A549 (cell line): ENCODE measurements at regions of chr1 and their contacts with region 1.

Region 1: DNA sequence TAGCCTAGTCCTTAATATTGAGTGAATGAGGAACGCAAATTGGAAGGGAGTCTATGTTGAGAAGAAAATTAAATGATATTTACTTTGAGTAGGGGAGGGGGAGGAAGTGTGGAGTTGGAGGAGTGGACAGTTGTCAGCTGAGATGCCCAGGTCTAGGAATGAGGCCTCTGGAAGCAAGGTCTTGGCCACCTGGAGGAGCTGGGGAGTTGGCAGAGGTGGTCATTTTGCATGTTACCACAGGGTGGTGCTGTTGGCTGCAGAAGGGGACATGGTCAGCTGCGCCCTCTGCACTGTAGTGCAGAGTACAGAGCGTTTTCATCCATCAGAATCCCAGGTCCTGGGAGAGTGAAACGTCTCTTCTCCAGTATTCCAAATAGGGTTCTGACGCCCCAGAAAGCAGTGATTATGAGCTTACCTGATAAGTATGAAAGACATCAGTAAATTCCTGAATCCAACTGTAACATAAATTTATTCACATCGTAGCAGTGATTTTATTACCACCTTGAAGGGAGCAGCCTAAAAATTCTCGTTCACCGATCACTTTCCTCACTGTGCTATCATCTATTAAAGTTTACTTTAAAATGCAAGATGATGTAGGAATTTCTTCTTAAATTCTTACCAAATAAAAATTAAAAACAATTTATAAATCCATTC is 13.8 kb downstream of the PARK7 start:
- DNase-seq: peak; percentile 70 to 86
- ATAC-seq: peak; percentile 100
- H3K4me3 ChIP-seq: no peak overlapping the region
- H3K27ac ChIP-seq: peak overlapping the region in 1 of 2 experiments; percentile 31; a peak in 1 of 6 replicates
- H3K4me1 ChIP-seq: 0 out of 3 replicates have a peak, but pooled peaks cover 3% of the 10 kb centered on the region
- CTCF ChIP-seq: peak; percentile 89
- EP300 ChIP-seq: no peak
- POLR2A ChIP-seq: no peak
- RAD21 ChIP-seq: peak; percentile 87

Region 2: GRCh38 chr1:7873801-7874795 is 101.2 kb before region 1 on chr1:
- CTCF ChIA-PET with region 1: no interaction called
- POLR2A ChIA-PET with region 1: no interaction called
- DNase-seq: no peak
- ATAC-seq: no peak
- H3K4me3 ChIP-seq: no peak overlapping the region
- H3K27ac ChIP-seq: no peak overlapping the region
- H3K4me1 ChIP-seq: no peaks in the 10 kb centered on the region
- CTCF ChIP-seq: no peak
- EP300 ChIP-seq: no peak
- POLR2A ChIP-seq: no peak
- RAD21 ChIP-seq: no peak

Region 3: GRCh38 chr1:7940745-7941436 is 34.4 kb before region 1 on chr1 and contains the start of gene TNFRSF9:
- CTCF ChIA-PET with region 1: no interaction called
- POLR2A ChIA-PET with region 1: no interaction called
- DNase-seq: peak; percentile 40 to 77
- ATAC-seq: peak; percentile 75 to 91
- H3K4me3 ChIP-seq: no peak within 1 kb of the TSS
- H3K27ac ChIP-seq: peak within 1 kb of the TSS in 1 of 2 experiments; percentile 67; a peak in 3 of 6 replicates
- H3K4me1 ChIP-seq: peaks cover 24% of the 10 kb centered on the region
- CTCF ChIP-seq: no peak
- EP300 ChIP-seq: no peak
- POLR2A ChIP-seq: no peak
- RAD21 ChIP-seq: no peak
- polyA plus RNA-seq, gene TNFRSF9: 3.2 and 3.4 TPM in 2 replicates

Region 4: DNA sequence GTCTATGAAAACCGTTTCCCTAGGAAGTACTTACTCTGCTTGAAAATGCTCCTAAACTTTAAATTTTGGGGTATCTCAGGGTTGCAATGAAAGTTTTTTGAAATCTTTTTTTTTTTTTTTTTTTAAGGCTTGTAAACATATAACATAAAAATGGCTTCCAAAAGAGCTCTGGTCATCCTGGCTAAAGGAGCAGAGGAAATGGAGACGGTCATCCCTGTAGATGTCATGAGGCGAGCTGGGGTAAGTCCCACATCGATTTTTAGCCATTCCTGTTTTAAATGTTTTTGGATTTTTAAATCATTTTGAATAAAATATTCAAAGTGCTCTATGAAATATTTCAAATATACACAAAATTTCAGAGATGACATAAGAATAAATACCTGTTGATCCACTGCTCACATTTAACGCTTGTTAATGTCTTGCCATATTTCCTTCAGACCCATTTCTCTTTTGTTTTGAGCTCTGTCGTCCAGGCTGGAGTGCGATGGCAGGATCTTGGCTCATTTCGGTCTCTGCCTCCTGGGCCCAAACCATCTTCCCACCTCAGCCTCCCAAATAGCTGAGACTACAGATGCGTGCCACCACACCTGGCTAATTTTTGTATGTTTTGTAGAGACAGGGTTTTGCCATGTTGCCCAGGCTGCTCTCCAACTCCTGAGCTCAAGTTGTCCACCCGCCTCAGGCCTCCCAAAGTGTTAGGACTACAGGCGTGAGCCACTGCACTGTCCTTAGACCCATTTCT is 12.5 kb before region 1 on chr1:
- CTCF ChIA-PET with region 1: interaction called, 16 read pairs
- POLR2A ChIA-PET with region 1: interaction called, 3 read pairs
- DNase-seq: no peak
- ATAC-seq: no peak
- H3K4me3 ChIP-seq: peak overlapping the region; percentile 96
- H3K27ac ChIP-seq: peak overlapping the region; percentile 91 to 99; a peak in 4 of 6 replicates
- H3K4me1 ChIP-seq: peaks cover 10% of the 10 kb centered on the region; the same call in 1 of the 3 replicates
- CTCF ChIP-seq: no peak
- EP300 ChIP-seq: no peak
- POLR2A ChIP-seq: no peak
- RAD21 ChIP-seq: no peak

Region 5: GRCh38 chr1:8010080-8010664 is 34.8 kb after region 1 on chr1:
- CTCF ChIA-PET with region 1: interaction called, 86 read pairs
- POLR2A ChIA-PET with region 1: interaction called, 5 read pairs
- DNase-seq: no peak
- ATAC-seq: peak; percentile 3 to 27; a peak in 3 of 6 replicates
- H3K4me3 ChIP-seq: no peak overlapping the region
- H3K27ac ChIP-seq: peak overlapping the region in 1 of 2 experiments; percentile 34; a peak in 1 of 6 replicates
- H3K4me1 ChIP-seq: peaks cover 78% of the 10 kb centered on the region
- CTCF ChIP-seq: no peak
- EP300 ChIP-seq: no peak
- POLR2A ChIP-seq: no peak
- RAD21 ChIP-seq: no peak

Region 6: DNA sequence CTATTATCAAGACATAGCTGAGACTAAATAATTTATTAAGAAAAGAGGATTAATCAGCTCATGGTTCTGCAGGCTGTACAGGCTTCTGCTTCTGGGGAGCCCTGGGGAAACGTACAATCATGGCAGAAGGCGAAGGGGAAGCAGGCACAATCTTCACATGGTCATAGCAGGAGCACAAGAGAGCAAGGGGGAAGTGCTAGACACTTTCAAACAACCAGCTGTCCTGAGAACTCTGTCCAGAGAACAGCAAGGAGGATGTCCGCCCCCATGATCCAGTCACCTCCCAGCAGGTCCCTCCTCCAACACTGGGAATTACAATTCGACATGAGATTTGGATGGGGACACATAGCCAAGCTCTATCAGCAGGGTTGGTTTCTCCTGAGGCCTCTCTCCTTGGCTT is 332.3 kb after region 1 on chr1:
- CTCF ChIA-PET with region 1: interaction called, 10 read pairs
- POLR2A ChIA-PET with region 1: no interaction called
- DNase-seq: no peak
- ATAC-seq: no peak
- H3K4me3 ChIP-seq: no peak overlapping the region
- H3K27ac ChIP-seq: peak overlapping the region; percentile 11 to 17; a peak in 2 of 6 replicates
- H3K4me1 ChIP-seq: no peaks in the 10 kb centered on the region
- CTCF ChIP-seq: no peak
- EP300 ChIP-seq: no peak
- POLR2A ChIP-seq: no peak
- RAD21 ChIP-seq: no peak

Region 7: GRCh38 chr1:8348777-8349491 is 373.6 kb after region 1 on chr1:
- CTCF ChIA-PET with region 1: interaction called, 76 read pairs
- POLR2A ChIA-PET with region 1: no interaction called
- DNase-seq: peak; percentile 56 to 58
- ATAC-seq: peak; percentile 60 to 75; a peak in 5 of 6 replicates
- H3K4me3 ChIP-seq: no peak overlapping the region
- H3K27ac ChIP-seq: peak overlapping the region; percentile 73 to 82; a peak in 5 of 6 replicates
- H3K4me1 ChIP-seq: peaks cover 17% of the 10 kb centered on the region
- CTCF ChIP-seq: peak; percentile 78
- EP300 ChIP-seq: no peak
- POLR2A ChIP-seq: no peak
- RAD21 ChIP-seq: peak; percentile 87 to 90